ENCODE measurements at regions of chr5 and their contacts with region 1.

Region 1: DNA sequence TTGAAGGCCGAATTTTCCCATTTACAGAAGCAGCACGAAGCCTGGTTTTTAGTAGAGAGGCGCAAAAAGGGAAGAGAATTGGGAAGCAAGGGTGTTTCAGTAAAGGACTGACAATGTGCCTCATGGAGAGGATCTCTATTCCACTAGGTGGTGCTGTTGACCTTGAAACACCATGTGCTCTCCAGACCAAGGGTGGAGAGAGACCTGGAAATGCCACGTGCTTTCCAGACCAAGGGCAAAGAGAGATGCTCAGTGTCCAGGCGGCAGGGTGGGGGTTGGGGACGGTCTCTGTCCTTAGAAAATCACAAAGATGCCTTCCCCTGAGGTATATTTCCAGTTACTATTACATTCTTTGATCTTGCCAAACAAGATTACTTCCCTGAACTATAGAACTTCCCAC is 425.3 kb downstream of the CSNK1G3 start:
- DNase-seq: peak; percentile 24
- ATAC-seq: no peak
- H3K4me3 Mint-ChIP-seq: no peak overlapping the region
- H3K27ac Mint-ChIP-seq: no peak overlapping the region
- H3K4me1 Mint-ChIP-seq: peaks cover 5% of the 10 kb centered on the region
- H3K27me3 Mint-ChIP-seq: no peaks in the 10 kb centered on the region
- CTCF ChIP-seq: peak; percentile 53

Region 2: DNA sequence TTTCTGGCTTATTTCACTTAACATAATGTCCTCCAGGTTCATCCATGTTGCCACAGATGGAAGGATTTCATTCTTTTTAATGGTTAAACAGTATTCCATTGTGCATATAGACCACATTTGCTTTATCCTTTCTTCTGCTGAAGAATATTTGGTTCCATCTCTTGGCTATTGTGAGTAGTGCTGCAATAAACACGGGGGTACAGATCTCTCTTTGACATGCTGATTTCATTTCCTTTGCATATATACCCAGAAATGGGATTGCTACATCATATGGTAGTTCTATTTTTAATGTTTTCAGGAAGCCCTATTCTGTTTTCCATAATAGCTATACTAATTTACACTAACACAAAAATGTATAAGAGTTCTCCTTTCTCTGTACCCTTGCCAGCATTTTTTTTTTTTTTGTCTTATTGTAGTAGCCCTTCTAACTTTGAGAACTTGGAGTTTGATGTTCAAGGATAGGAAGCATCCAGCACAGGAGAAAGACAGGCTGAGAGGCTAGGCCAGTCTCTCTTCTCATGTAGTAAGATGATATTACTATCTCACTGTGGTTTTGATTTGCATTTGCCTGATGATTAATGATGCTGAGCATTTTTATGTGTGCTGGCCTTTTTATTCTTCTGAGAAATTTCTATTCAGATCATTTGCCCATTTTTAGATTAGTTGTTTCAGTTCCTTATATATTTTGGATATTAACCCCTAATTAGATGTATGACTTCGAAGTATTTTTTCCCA is 1401.4 kb after region 1 on chr5:
- CTCF ChIA-PET with region 1: no interaction called
- POLR2A ChIA-PET with region 1: no interaction called
- intact Hi-C with region 1: loop called (anchors 10 kb)
- DNase-seq: no peak
- ATAC-seq: peak; percentile 25
- H3K4me3 Mint-ChIP-seq: no peak overlapping the region
- H3K27ac Mint-ChIP-seq: no peak overlapping the region
- H3K4me1 Mint-ChIP-seq: peaks cover 12% of the 10 kb centered on the region
- H3K27me3 Mint-ChIP-seq: no peaks in the 10 kb centered on the region
- CTCF ChIP-seq: no peak

Region 3: GRCh38 chr5:125835293-125836172 is 1898.3 kb after region 1 on chr5:
- CTCF ChIA-PET with region 1: no interaction called
- POLR2A ChIA-PET with region 1: no interaction called
- intact Hi-C with region 1: loop called (anchors 1 kb)
- DNase-seq: no peak
- ATAC-seq: peak; percentile 56
- H3K4me3 Mint-ChIP-seq: no peak overlapping the region
- H3K27ac Mint-ChIP-seq: no peak overlapping the region
- H3K4me1 Mint-ChIP-seq: peaks cover 3% of the 10 kb centered on the region
- H3K27me3 Mint-ChIP-seq: peaks cover 6% of the 10 kb centered on the region
- CTCF ChIP-seq: no peak

Measured in activated B cell treated with CpG ODN at 0.5 μM for 24 hours (primary cell).